CD4-positive, alpha-beta memory T cell (primary cell): ENCODE measurements at regions of chr1 and their contacts with region 1.

Region 1: DNA sequence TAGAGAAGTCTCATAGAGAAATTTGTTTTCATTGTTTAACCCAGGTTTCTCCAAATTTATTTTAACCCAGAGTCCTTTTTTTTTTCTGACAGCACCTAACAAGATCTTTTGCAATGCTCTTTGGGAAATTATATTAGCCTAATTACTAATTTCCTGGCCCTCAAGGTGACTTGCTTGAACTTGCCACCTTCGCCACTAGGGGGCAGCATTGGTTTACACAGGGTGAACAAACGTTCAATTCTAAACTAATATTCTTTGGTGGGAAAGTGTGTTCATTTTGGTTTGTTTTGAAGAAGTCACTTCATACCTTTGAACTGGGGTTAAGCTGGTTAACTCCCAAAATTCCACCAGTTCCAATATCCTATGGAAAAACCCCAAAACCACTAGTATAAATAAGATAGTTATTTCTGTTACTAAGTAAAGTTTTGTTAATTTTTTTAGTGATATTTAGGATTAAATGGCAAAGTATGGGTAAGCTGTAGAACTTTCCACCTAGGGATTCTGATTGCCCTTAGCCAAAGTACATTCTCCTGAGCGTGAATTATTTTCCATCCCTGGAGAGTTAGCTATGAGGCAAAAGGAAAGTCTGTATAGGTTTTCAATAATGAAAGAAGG is 13.0 kb downstream of the CCDC190 start:
- DNase-seq: peak; percentile 50 to 73 (median 56)
- H3K4me3 ChIP-seq: no peak overlapping the region
- H3K4me3 Mint-ChIP-seq: no peak overlapping the region
- H3K27ac ChIP-seq: no peak overlapping the region
- H3K27ac Mint-ChIP-seq: no peak overlapping the region
- H3K4me1 ChIP-seq: no peaks in the 10 kb centered on the region
- H3K4me1 Mint-ChIP-seq: no peaks in the 10 kb centered on the region
- H3K27me3 ChIP-seq: no peaks in the 10 kb centered on the region
- H3K27me3 Mint-ChIP-seq: peaks cover 8 to 10% of the 10 kb centered on the region in 2 donors

Region 2: DNA sequence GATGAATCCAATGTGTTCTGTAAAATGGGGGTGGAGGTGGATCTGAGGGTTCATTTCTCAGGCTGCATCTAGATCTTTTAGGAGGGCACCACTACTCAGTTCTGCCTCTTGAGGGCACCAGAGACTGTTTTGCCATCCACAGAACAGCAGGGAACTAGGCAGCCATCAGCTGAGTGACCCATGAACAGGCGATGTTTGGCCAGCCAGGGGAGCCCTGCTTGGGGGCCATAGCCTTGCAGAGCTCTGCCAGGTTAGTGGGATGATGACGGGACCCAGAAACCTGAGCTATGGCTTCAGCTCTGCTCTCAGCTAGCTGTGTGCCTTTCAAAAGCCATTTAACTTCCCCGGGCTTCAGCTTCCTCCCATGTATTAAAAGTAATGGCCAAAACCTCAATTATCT is 791.9 kb before region 1 on chr1:
- CTCF ChIA-PET with region 1: interaction called, 3 read pairs
- POLR2A ChIA-PET with region 1: no interaction called
- intact Hi-C with region 1: loop called (anchors 5 kb)
- DNase-seq: peak in 4 of 5 donors; percentile 25 to 41 (median 30)
- H3K4me3 ChIP-seq: no peak overlapping the region
- H3K4me3 Mint-ChIP-seq: no peak overlapping the region
- H3K27ac ChIP-seq: no peak overlapping the region
- H3K27ac Mint-ChIP-seq: no peak overlapping the region
- H3K4me1 ChIP-seq: no peaks in the 10 kb centered on the region
- H3K4me1 Mint-ChIP-seq: no peaks in the 10 kb centered on the region
- H3K27me3 ChIP-seq: no peaks in the 10 kb centered on the region
- H3K27me3 Mint-ChIP-seq: peaks cover 8 to 11% of the 10 kb centered on the region in 2 donors

Region 3: GRCh38 chr1:162835157-162835899 is 12.6 kb before region 1 on chr1:
- CTCF ChIA-PET with region 1: interaction called, 20 read pairs
- POLR2A ChIA-PET with region 1: no interaction called
- intact Hi-C with region 1: no loop called
- DNase-seq: no peak
- H3K4me3 ChIP-seq: no peak overlapping the region
- H3K4me3 Mint-ChIP-seq: no peak overlapping the region
- H3K27ac ChIP-seq: no peak overlapping the region
- H3K27ac Mint-ChIP-seq: no peak overlapping the region
- H3K4me1 ChIP-seq: no peaks in the 10 kb centered on the region
- H3K4me1 Mint-ChIP-seq: peaks cover 0 to 2% (median 0%) of the 10 kb centered on the region in 4 donors
- H3K27me3 ChIP-seq: no peaks in the 10 kb centered on the region
- H3K27me3 Mint-ChIP-seq: peaks cover 2 to 8% of the 10 kb centered on the region in 2 donors

Region 4: DNA sequence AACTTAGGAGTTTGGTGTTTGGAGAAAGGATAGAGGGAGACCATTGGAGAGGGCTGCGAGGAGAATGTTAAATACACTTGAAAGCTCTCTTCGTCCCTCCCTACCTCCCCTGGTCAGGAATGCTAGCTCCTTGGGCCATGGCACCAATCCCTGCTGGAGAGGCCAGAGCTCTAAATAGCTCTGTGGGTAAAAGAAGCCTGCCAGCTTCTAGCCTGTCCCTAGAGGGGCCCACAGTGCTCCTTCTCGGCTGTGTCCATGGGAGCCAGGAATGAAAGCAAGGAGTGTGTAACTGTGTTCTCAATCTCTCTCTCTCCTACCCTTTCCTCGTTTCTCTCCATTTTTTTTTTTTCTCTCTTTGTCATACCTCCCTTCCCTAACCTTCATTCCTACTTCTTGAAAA is 13.2 kb after region 1 on chr1 and contains the start of gene CCDC190:
- CTCF ChIA-PET with region 1: interaction called, 28 read pairs
- POLR2A ChIA-PET with region 1: no interaction called
- intact Hi-C with region 1: no loop called
- DNase-seq: no peak
- H3K4me3 ChIP-seq: no peak within 1 kb of the TSS
- H3K4me3 Mint-ChIP-seq: no peak within 1 kb of the TSS
- H3K27ac ChIP-seq: no peak within 1 kb of the TSS
- H3K27ac Mint-ChIP-seq: no peak within 1 kb of the TSS
- H3K4me1 ChIP-seq: no peaks in the 10 kb centered on the region
- H3K4me1 Mint-ChIP-seq: no peaks in the 10 kb centered on the region
- H3K27me3 ChIP-seq: no peaks in the 10 kb centered on the region
- H3K27me3 Mint-ChIP-seq: peaks cover 4 to 21% of the 10 kb centered on the region in 2 donors
- total RNA-seq, gene CCDC190: not detected

Region 5: GRCh38 chr1:163174524-163175437 is 326.8 kb after region 1 on chr1:
- CTCF ChIA-PET with region 1: interaction called, 6 read pairs
- POLR2A ChIA-PET with region 1: no interaction called
- intact Hi-C with region 1: loop called (anchors 2 kb)
- DNase-seq: peak in 3 of 5 donors; percentile 1 to 12 (median 1)
- H3K4me3 ChIP-seq: no peak overlapping the region
- H3K4me3 Mint-ChIP-seq: no peak overlapping the region
- H3K27ac ChIP-seq: no peak overlapping the region
- H3K27ac Mint-ChIP-seq: peak overlapping the region in 1 of 7 donors; percentile 29
- H3K4me1 ChIP-seq: no peaks in the 10 kb centered on the region
- H3K4me1 Mint-ChIP-seq: no peaks in the 10 kb centered on the region
- H3K27me3 ChIP-seq: no peaks in the 10 kb centered on the region
- H3K27me3 Mint-ChIP-seq: no peaks in the 10 kb centered on the region

Region 6: DNA sequence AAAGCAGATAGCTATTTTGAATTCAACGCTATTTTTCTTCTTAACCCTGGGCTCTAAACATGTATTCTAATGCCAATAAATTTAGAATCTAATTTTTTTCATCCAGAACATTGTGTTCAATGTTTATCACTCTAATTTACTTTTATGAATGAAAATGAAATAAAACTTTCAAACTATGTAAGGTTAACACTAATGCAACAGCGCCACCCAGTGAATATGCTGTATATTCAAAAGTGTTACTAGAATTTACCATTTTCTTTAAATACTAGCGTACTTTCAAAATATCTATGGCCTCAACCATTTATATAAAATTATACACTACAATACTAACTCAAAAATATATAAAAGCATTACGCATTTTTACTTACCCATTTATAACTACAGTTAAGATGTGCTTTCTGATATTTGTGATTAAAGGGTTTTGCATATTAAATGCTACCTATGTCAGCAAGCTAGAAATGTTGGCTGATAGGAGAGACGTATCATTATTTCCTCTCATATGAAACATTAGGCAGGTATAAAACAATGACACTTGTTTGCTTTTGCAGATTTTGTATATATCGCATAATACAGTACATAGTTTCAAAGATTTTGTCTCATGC is 467.9 kb after region 1 on chr1:
- CTCF ChIA-PET with region 1: interaction called, 78 read pairs
- POLR2A ChIA-PET with region 1: no interaction called
- intact Hi-C with region 1: no loop called
- DNase-seq: peak; percentile 32 to 49 (median 43)
- H3K4me3 ChIP-seq: no peak overlapping the region
- H3K4me3 Mint-ChIP-seq: no peak overlapping the region
- H3K27ac ChIP-seq: no peak overlapping the region
- H3K27ac Mint-ChIP-seq: peak overlapping the region in 1 of 7 donors; percentile 31
- H3K4me1 ChIP-seq: peaks cover 8% of the 10 kb centered on the region
- H3K4me1 Mint-ChIP-seq: peaks cover 2 to 5% (median 3%) of the 10 kb centered on the region in 4 donors
- H3K27me3 ChIP-seq: no peaks in the 10 kb centered on the region
- H3K27me3 Mint-ChIP-seq: no peaks in the 10 kb centered on the region